ENCODE measurements at regions of chr5 and their contacts with region 1.

Region 1: GRCh38 chr5:150656191-150657132 is 4.6 kb upstream of the MYOZ3 start:
- DNase-seq: peak; percentile 74 to 92
- H3K4me3 ChIP-seq: peak overlapping the region; percentile 71
- H3K4me3 Mint-ChIP-seq: peak overlapping the region; percentile 79
- H3K27ac Mint-ChIP-seq: peak overlapping the region; percentile 45
- H3K4me1 ChIP-seq: peaks cover 4% of the 10 kb centered on the region; the same call in 1 of the 2 replicates
- H3K4me1 Mint-ChIP-seq: peaks cover 17% of the 10 kb centered on the region
- H3K27me3 ChIP-seq: no peaks in the 10 kb centered on the region
- H3K27me3 Mint-ChIP-seq: no peaks in the 10 kb centered on the region
- CTCF ChIP-seq: peak; percentile 74 to 87

Region 2: DNA sequence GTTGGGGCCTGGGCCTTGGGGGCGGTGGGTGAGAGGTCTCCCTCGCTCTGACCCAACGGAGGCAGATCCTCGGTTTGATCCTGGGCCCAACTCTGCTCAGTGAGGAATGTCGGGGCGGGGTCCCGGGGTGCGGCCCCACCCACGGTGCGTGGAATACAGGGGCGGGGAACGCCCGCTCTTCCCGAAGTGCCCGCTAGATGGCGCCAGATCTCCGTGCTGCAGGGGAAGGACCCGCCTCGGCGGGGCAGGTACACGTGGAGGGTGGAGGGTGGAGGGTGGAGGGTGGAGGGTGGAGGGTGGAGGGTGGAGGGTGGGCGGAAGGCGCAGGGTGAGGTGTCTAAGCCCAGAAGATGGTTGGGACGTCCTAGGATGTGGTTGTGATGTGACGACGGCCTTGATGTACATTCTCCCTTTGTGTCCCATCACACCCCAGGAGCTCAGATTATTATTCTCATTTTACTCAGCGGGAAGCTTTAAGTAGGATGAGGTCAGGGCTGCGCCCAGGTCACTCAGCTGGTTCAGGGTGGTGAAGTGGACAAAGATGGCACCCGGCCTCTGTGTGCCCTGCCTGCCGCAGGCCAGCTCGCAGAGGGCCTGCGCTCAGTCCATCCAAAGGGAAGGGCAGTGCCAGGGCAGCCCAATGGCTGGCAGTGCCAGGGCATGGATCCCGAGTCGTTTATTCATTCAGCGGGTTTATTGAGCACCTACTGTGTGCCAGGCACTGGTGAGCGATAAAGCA is 197.5 kb before region 1 on chr5:
- CTCF ChIA-PET with region 1: interaction called, 4 read pairs
- POLR2A ChIA-PET with region 1: no interaction called
- intact Hi-C with region 1: loop called (anchors 2 kb)
- DNase-seq: peak; percentile 90 to 95
- H3K4me3 ChIP-seq: no peak overlapping the region
- H3K4me3 Mint-ChIP-seq: peak overlapping the region; percentile 25
- H3K27ac Mint-ChIP-seq: peak overlapping the region; percentile 19
- H3K4me1 ChIP-seq: peaks cover 10% of the 10 kb centered on the region
- H3K4me1 Mint-ChIP-seq: peaks cover 15% of the 10 kb centered on the region
- H3K27me3 ChIP-seq: no peaks in the 10 kb centered on the region
- H3K27me3 Mint-ChIP-seq: no peaks in the 10 kb centered on the region
- CTCF ChIP-seq: peak; percentile 86 to 91

Region 3: DNA sequence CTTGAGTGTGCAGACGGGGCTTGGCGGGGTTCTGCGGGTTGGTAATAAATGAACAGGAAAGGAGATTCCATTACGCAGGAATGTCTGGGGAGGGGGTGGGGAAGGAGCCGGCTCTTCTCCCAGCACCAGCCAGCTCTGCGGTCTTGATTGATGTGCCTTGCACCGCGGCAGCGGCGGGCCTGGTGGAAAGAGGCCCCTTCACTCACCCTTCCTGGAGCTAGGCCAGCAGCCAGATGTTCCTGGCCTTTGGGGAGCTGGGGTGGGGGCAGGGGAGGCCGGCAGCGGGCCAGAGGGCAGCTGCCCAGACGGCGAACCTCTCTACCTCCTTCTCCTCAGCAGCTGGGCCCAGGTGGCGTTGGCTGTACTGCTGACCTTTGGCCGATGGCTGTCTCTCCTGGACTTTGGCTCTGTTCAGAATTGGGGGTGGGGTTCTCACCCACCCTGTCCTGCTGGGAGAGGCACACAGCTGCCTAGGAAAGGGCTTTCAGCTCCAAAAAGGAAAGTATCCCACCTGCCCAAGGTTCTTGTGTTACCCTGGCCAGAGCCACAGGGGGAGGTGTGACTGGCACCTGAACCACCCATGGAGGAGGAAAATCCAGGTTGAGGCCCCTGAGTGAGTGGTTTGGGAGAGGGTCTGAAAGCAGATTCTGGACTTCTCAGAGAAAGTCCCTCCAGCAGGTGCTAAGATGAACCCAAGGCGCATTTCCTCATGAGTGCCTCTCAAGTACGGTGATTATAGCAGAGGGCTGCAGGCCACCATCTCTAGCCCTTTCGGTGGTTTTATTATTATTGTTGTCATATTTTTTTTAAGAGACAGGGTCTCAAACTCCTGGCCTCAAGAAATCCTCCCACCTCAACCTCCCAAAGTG is 74.0 kb before region 1 on chr5:
- CTCF ChIA-PET with region 1: interaction called, 3 read pairs
- POLR2A ChIA-PET with region 1: no interaction called
- intact Hi-C with region 1: loop called (anchors 1 kb)
- DNase-seq: peak; percentile 88 to 94
- H3K4me3 ChIP-seq: peak overlapping the region; percentile 32
- H3K4me3 Mint-ChIP-seq: peak overlapping the region; percentile 75
- H3K27ac Mint-ChIP-seq: peak overlapping the region; percentile 91
- H3K4me1 ChIP-seq: peaks cover 57% of the 10 kb centered on the region
- H3K4me1 Mint-ChIP-seq: peaks cover 17% of the 10 kb centered on the region
- H3K27me3 ChIP-seq: no peaks in the 10 kb centered on the region
- H3K27me3 Mint-ChIP-seq: no peaks in the 10 kb centered on the region
- CTCF ChIP-seq: no peak

Region 4: DNA sequence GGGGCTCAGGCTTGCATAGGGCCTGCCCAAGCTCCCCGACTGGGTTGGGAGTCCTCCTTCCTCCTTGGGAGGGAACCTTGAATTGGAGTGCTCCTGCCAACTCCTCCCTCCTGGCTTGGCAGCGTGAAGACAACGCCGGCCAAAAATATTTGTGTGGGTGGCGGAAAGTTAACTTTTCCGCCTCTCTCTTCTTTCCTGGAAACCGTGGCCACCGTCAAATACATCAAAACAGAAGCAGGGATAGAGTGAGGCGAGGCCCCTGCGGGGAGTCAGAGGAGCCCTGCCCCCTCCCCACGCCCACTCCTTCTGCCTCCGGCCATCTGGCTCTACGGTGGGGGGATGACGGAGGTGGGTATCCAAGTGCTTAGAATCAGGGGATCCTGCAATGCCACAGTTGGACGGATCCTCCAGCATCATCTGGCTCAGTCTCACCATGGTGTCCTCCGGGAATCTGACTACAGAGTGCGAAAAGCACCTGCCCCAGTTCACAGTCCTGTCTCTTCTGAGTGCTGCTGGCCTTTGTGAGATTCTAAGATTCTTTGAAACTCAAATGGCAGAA is 41.2 kb before region 1 on chr5:
- CTCF ChIA-PET with region 1: no interaction called
- POLR2A ChIA-PET with region 1: no interaction called
- intact Hi-C with region 1: loop called (anchors 2 kb)
- DNase-seq: no peak
- H3K4me3 ChIP-seq: no peak overlapping the region
- H3K4me3 Mint-ChIP-seq: no peak overlapping the region
- H3K27ac Mint-ChIP-seq: no peak overlapping the region
- H3K4me1 ChIP-seq: peaks cover 12% of the 10 kb centered on the region
- H3K4me1 Mint-ChIP-seq: peaks cover 11% of the 10 kb centered on the region
- H3K27me3 ChIP-seq: no peaks in the 10 kb centered on the region
- H3K27me3 Mint-ChIP-seq: no peaks in the 10 kb centered on the region
- CTCF ChIP-seq: no peak

Region 5: DNA sequence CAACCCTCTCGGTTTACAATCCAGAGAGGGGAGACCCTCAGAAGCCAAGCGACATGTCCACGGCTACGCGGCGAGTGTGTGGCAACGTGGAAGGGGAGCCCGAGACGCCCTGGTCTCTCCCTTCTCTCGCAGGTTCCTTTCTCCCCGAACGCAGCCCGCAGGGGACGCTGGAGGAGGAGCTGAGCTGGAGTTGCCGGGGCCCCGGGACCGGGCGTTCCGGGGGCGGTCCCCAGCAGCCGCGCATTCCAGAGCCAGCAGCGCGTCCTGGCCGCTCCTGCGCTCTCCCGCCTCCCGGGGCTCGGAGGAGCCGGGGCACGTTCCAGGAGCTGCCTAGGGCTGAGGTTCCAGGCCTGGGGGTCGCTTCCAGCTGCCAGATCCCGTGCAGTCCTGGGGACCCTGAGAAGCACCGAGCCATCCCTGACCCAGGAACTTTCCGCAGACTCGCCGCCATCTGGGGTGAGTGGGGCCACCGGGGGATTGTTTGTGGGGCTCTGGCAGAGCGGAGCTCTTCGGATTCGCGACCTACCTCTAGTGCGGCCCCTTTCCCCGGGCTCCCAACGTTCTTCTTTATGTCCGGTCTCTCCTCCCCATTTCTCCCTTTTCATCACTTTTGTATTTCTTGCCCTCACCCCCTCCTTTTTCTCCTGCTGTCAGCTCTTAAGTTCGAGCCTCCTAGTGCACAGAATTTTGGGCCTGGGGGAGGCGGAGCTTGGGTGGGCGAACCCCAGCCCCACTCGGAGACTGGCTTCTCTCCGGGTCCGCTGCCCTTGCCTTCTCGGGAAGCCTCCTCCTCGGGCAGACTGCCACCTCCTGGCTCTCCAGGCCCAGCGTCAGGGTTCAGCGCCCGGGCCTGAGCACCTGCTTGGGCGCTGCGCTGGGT is 122.3 kb after region 1 on chr5 and contains the start of gene SMIM3:
- CTCF ChIA-PET with region 1: interaction called, 3 read pairs
- POLR2A ChIA-PET with region 1: no interaction called
- intact Hi-C with region 1: loop called (anchors 2 kb)
- DNase-seq: peak; percentile 86 to 89
- H3K4me3 ChIP-seq: peak within 1 kb of the TSS; percentile 75
- H3K4me3 Mint-ChIP-seq: peak within 1 kb of the TSS; percentile 91
- H3K27ac Mint-ChIP-seq: peak within 1 kb of the TSS; percentile 80
- H3K4me1 ChIP-seq: peaks cover 34% of the 10 kb centered on the region
- H3K4me1 Mint-ChIP-seq: peaks cover 32% of the 10 kb centered on the region
- H3K27me3 ChIP-seq: no peaks in the 10 kb centered on the region
- H3K27me3 Mint-ChIP-seq: no peaks in the 10 kb centered on the region
- CTCF ChIP-seq: peak; percentile 35 to 83
- total RNA-seq, gene SMIM3: 19.2 and 19.4 TPM in 2 replicates

Measured in Caco-2 (cell line).